Activated CD4-positive, alpha-beta T cell treated with anti-CD3 and anti-CD28 coated beads for 36 hours (primary cell): ENCODE measurements at regions of chr16 and their contacts with region 1.

Region 1: GRCh38 chr16:2267913-2268666 is at the start of gene RNPS1:
- DNase-seq: peak; percentile 98
- ATAC-seq: peak; percentile 86
- H3K4me3 Mint-ChIP-seq: peak within 1 kb of the TSS; percentile 92
- H3K27ac Mint-ChIP-seq: peak within 1 kb of the TSS; percentile 96
- H3K4me1 Mint-ChIP-seq: peaks cover 34% of the 10 kb centered on the region
- H3K27me3 Mint-ChIP-seq: no peaks in the 10 kb centered on the region
- total RNA-seq, gene RNPS1: 327 to 445 TPM

Region 2: GRCh38 chr16:1782352-1783091 is 485.6 kb before region 1 on chr16 and contains the starts of genes NUBP2 and SPSB3:
- CTCF ChIA-PET with region 1: no interaction called
- POLR2A ChIA-PET with region 1: no interaction called
- intact Hi-C with region 1: loop called in 1 of 2 experiments (anchors 1 kb)
- DNase-seq: peak; percentile 99
- ATAC-seq: peak; percentile 93
- H3K4me3 Mint-ChIP-seq: peak within 1 kb of the TSS; percentile 94
- H3K27ac Mint-ChIP-seq: peak within 1 kb of the TSS; percentile 85
- H3K4me1 Mint-ChIP-seq: peaks cover 26% of the 10 kb centered on the region
- H3K27me3 Mint-ChIP-seq: no peaks in the 10 kb centered on the region
- total RNA-seq, gene NUBP2: 34.4 to 42.4 TPM
- total RNA-seq, gene SPSB3: 12.5 to 13.6 TPM

Region 3: DNA sequence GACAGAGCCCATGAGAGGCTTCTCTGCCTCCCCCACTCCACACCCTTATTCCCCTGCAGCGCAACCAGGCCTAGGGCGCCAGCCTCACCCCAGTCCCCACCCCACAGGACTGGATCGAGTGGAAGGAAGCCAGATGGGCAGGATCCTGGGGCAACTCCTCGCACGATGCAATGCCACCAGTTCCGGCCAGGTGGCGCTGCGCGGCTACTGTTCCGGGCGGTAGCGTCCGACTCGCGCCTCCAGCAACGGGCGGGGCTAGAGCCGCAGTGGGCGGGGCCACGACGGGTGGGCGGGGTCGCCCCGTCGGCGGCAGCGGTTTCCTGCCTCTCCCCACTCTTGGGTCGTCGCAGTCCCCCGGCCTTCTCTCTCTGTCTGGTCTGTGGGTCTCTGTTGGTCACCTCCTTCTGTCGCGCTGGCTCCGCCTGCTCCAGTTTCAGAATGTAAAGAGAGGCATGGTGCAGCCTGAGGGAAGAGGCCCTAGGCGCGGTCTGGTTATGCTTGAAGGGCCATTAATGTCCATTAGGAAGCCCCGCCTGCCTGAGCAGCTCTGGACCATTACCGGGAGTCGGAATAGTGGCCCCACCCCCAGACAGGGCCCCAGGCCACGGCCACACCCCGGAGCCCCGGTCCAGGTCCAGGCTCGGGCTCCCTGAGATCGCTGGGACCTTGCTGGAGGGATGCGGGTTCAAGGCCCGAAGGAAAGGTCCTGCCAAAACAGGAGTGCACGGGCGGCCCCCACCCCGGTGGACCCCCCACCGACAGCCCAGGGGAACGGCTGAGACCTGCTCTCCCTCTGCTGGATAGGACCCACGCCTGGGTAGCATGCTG is 244.8 kb before region 1 on chr16:
- CTCF ChIA-PET with region 1: no interaction called
- POLR2A ChIA-PET with region 1: no interaction called
- intact Hi-C with region 1: loop called in 1 of 2 experiments (anchors 1 kb)
- DNase-seq: peak; percentile 97
- ATAC-seq: peak; percentile 86
- H3K4me3 Mint-ChIP-seq: peak overlapping the region; percentile 46
- H3K27ac Mint-ChIP-seq: no peak overlapping the region
- H3K4me1 Mint-ChIP-seq: peaks cover 15% of the 10 kb centered on the region
- H3K27me3 Mint-ChIP-seq: peaks cover 27% of the 10 kb centered on the region

Region 4: GRCh38 chr16:2223375-2224182 is 44.5 kb before region 1 on chr16 and contains the start of gene E4F1:
- CTCF ChIA-PET with region 1: no interaction called
- POLR2A ChIA-PET with region 1: no interaction called
- intact Hi-C with region 1: loop called (anchors 1 kb)
- DNase-seq: peak; percentile 100
- ATAC-seq: peak; percentile 99
- H3K4me3 Mint-ChIP-seq: peak within 1 kb of the TSS; percentile 78
- H3K27ac Mint-ChIP-seq: peak within 1 kb of the TSS; percentile 13
- H3K4me1 Mint-ChIP-seq: peaks cover 15% of the 10 kb centered on the region
- H3K27me3 Mint-ChIP-seq: no peaks in the 10 kb centered on the region
- total RNA-seq, gene E4F1: 18.0 to 18.6 TPM

Region 5: DNA sequence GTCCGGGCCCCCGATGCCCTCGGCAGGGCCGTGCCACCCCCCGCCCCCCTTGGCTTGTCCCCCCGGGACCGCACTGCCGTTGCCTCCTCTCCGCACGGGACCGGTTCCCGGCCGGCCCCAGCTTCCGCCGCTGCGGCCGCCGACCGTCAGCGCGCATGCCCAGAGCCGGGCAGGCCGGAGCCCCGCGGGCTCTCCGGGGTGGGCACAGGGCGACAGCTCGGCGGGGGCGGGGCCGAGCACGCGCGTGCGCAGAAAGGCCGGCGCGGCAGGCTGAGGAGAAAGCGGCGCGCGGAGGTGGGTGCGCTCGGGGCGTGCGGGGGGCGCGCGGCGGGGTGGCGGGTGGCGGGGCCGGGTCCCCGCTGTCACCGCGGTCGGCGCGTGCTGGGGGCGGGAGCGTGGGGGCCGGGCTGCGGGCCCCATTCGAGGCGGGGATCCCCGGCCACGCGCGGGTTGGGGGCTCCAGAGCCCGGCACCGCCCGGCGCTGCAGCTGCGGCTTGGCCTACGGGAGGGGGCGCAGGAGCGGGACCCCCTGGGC is 206.9 kb after region 1 on chr16 and contains the start of gene TBC1D24:
- CTCF ChIA-PET with region 1: no interaction called
- POLR2A ChIA-PET with region 1: no interaction called
- intact Hi-C with region 1: loop called in 1 of 2 experiments (anchors 5 kb)
- DNase-seq: peak; percentile 89
- ATAC-seq: peak; percentile 71
- H3K4me3 Mint-ChIP-seq: peak within 1 kb of the TSS; percentile 71
- H3K27ac Mint-ChIP-seq: peak within 1 kb of the TSS; percentile 69
- H3K4me1 Mint-ChIP-seq: peaks cover 6% of the 10 kb centered on the region
- H3K27me3 Mint-ChIP-seq: peaks cover 16% of the 10 kb centered on the region
- total RNA-seq, gene TBC1D24: 10.4 to 12.7 TPM

Region 6: GRCh38 chr16:2752035-2752849 is 484.2 kb after region 1 on chr16 and contains the start of gene SRRM2:
- CTCF ChIA-PET with region 1: no interaction called
- POLR2A ChIA-PET with region 1: no interaction called
- intact Hi-C with region 1: loop called in 1 of 2 experiments (anchors 1 kb)
- DNase-seq: peak; percentile 97
- ATAC-seq: peak; percentile 90
- H3K4me3 Mint-ChIP-seq: peak within 1 kb of the TSS; percentile 99
- H3K27ac Mint-ChIP-seq: peak within 1 kb of the TSS; percentile 98
- H3K4me1 Mint-ChIP-seq: peaks cover 45% of the 10 kb centered on the region
- H3K27me3 Mint-ChIP-seq: no peaks in the 10 kb centered on the region
- total RNA-seq, gene SRRM2: 517 to 598 TPM